ENCODE measurements at regions of chr3 and their contacts with region 1.

Region 1: GRCh38 chr3:190701096-190701532 is 161.4 kb downstream of the GMNC start:
- DNase-seq: peak; percentile 34
- H3K4me3 Mint-ChIP-seq: no peak overlapping the region
- H3K27ac Mint-ChIP-seq: no peak overlapping the region
- H3K4me1 Mint-ChIP-seq: no peaks in the 10 kb centered on the region
- H3K27me3 Mint-ChIP-seq: peaks cover 37% of the 10 kb centered on the region

Region 2: DNA sequence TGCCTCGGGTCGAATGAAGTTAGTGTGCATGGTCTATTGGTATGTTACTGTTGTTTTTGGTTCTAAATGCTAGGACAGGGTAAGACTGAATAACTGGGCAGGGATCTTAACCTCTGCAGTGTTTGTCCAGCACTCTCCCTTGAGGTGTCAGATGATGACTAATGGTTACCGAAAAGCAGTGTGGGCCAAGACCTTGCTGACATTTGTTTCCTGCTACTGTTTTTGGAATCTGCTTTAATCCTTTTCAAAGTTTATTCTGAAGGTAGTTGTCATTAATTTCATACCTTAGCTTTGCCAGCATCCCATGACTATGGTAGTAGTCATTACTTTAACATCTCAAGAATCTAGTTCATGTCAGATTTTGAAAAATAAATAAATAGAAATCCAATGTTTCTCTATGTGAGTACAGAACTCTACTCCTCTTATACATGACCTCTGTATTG is 697.4 kb before region 1 on chr3:
- CTCF ChIA-PET with region 1: no interaction called
- intact Hi-C with region 1: no loop called
- DNase-seq: no peak
- H3K4me3 Mint-ChIP-seq: no peak overlapping the region
- H3K27ac Mint-ChIP-seq: no peak overlapping the region
- H3K4me1 Mint-ChIP-seq: no peaks in the 10 kb centered on the region
- H3K27me3 Mint-ChIP-seq: peaks cover 10% of the 10 kb centered on the region

Region 3: GRCh38 chr3:190224863-190225692 is 476.0 kb before region 1 on chr3:
- CTCF ChIA-PET with region 1: interaction called, 4 read pairs
- intact Hi-C with region 1: loop called (anchors 2 kb)
- DNase-seq: no peak
- H3K4me3 Mint-ChIP-seq: no peak overlapping the region
- H3K27ac Mint-ChIP-seq: no peak overlapping the region
- H3K4me1 Mint-ChIP-seq: no peaks in the 10 kb centered on the region
- H3K27me3 Mint-ChIP-seq: peaks cover 2% of the 10 kb centered on the region

Region 4: DNA sequence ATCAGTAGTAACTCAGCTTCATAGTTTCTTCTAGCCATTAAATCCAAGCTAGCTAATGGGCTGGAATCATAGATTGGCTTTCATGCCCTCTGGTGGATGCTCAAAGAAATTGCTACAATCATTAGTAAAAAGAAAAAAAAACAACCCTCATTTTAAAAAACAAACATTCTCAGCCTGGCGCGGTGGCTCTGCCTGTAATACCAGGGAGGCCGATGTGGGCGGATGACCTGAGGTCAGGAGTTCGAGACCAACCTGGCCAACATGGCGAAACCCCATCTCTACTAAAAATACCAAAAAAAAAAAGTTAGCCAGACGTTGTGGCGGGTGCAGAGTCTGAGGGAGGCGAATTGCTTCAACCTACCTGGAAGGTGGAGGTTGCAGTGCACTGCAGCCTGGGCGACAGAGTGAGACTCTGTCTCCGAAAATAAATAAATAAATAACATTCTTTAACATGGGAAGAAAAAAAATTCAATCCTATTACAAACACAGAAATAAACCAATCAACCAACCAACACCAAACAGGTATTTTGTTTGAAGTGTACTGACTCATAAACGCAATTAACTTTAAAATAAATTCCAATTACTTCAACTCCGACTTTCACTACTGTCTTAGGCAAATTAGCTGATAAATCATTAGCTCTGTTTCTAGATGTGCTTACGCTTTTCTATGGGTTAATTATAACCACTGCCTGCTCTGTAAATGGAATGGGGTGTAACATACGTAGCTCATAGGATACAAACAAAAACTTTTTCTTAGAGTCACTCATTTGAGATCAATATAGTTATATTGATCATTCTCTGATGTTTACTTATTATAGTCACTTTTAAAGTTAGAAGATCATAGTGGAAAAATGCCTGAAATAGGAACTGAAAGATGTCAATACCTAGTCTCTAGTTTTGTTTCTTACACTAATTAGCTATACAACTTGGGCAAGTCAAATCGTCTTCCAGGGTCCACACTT is 276.4 kb before region 1 on chr3:
- CTCF ChIA-PET with region 1: no interaction called
- intact Hi-C with region 1: loop called (anchors 5 kb)
- DNase-seq: peak; percentile 59
- H3K4me3 Mint-ChIP-seq: no peak overlapping the region
- H3K27ac Mint-ChIP-seq: no peak overlapping the region
- H3K4me1 Mint-ChIP-seq: peaks cover 2% of the 10 kb centered on the region
- H3K27me3 Mint-ChIP-seq: no peaks in the 10 kb centered on the region

Region 5: GRCh38 chr3:190566043-190566933 is 134.8 kb before region 1 on chr3:
- CTCF ChIA-PET with region 1: interaction called, 4 read pairs
- intact Hi-C with region 1: loop called (anchors 1 kb)
- DNase-seq: peak; percentile 94
- H3K4me3 Mint-ChIP-seq: no peak overlapping the region
- H3K27ac Mint-ChIP-seq: peak overlapping the region; percentile 93
- H3K4me1 Mint-ChIP-seq: peaks cover 38% of the 10 kb centered on the region
- H3K27me3 Mint-ChIP-seq: no peaks in the 10 kb centered on the region

Region 6: DNA sequence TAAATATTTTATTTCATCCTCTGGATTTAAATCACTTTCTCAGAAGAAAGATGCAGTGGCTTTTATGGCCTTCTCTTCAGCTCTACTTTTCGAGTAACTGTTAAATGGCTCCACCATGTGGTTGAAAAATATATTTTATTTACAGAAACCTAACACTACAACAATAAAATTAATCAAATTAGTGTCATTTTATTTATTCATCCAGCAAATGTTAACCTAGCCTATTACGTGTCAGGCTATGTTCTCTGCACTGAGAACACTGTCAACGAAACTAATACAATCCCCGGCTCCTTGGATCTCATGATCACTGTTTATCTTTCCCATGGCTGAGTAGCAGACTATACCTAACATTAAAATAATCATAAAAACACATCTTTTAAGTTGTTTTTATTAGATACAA is 349.9 kb after region 1 on chr3:
- CTCF ChIA-PET with region 1: interaction called, 3 read pairs
- intact Hi-C with region 1: loop called (anchors 2 kb)
- DNase-seq: no peak
- H3K4me3 Mint-ChIP-seq: no peak overlapping the region
- H3K27ac Mint-ChIP-seq: no peak overlapping the region
- H3K4me1 Mint-ChIP-seq: no peaks in the 10 kb centered on the region
- H3K27me3 Mint-ChIP-seq: no peaks in the 10 kb centered on the region